MCF 10A (cell line): ENCODE measurements at regions of chr5 and their contacts with region 1.

Region 1: DNA sequence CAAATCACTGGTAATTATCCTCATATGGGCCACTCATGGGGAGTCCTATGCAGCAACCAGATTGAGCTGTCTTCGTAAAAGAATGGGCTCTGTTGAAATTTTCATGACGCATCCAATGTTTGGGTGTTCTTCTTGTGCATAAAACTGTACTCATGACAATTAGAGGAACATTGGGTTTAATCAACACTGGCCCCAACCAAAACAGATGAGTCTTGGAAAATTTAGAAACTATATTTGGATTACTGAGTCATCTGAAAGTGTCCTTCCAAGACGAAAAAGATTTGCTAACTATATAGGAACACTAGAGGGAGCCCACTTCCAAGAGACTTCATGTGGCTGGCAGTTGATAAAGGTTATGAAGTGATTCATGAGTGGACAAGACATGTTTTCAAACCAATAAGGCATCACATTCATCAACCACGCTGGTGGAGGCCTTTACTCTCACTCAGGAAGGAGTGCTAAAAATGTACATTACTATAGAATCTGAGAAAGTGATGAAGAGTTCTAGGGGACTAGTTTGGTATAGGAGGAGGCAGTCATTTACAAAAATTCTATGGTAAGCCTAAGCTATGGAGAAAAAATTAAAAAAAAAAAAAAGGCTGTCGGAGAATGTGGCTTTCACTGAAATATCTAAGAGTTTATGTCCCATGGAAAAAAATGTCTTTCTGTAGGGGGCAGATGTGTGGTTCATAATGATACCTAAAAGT is 313.5 kb downstream of the PRDM9 start:
- DNase-seq: peak; percentile 78
- H3K4me3 Mint-ChIP-seq: no peak overlapping the region
- H3K27ac Mint-ChIP-seq: peak overlapping the region; percentile 47
- H3K4me1 Mint-ChIP-seq: peaks cover 5% of the 10 kb centered on the region
- H3K27me3 Mint-ChIP-seq: no peaks in the 10 kb centered on the region
- CTCF ChIP-seq: peak; percentile 64

Region 2: DNA sequence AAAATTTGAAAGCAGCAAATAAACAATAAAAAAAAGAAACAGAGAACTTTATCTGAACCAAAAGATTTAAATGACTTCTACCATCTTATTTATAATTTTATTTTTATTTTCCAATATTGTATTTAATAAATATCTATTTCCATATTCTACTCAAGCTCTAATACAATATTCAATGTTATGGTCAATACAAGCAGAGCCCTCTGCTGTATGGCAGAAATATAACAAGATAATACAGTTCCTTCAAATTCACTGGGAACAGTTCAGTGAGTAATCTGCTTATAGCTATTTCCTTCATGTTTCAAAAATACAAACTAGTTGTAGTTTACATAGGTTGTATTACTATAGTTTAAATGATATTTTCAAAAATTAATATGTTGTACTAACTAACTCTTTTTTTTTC is 19.2 kb after region 1 on chr5:
- CTCF ChIA-PET with region 1: interaction called, 8 read pairs
- POLR2A ChIA-PET with region 1: interaction called, 3 read pairs
- intact Hi-C with region 1: loop called (anchors 2 kb)
- DNase-seq: peak; percentile 12
- H3K4me3 Mint-ChIP-seq: no peak overlapping the region
- H3K27ac Mint-ChIP-seq: no peak overlapping the region
- H3K4me1 Mint-ChIP-seq: no peaks in the 10 kb centered on the region
- H3K27me3 Mint-ChIP-seq: no peaks in the 10 kb centered on the region
- CTCF ChIP-seq: no peak

Region 3: GRCh38 chr5:23994581-23995370 is 173.9 kb after region 1 on chr5:
- CTCF ChIA-PET with region 1: interaction called, 12 read pairs
- POLR2A ChIA-PET with region 1: no interaction called
- intact Hi-C with region 1: loop called (anchors 1 kb)
- DNase-seq: peak; percentile 14
- H3K4me3 Mint-ChIP-seq: no peak overlapping the region
- H3K27ac Mint-ChIP-seq: no peak overlapping the region
- H3K4me1 Mint-ChIP-seq: no peaks in the 10 kb centered on the region
- H3K27me3 Mint-ChIP-seq: no peaks in the 10 kb centered on the region
- CTCF ChIP-seq: peak; percentile 17

Region 4: GRCh38 chr5:24110004-24110615 is 289.2 kb after region 1 on chr5:
- CTCF ChIA-PET with region 1: interaction called, 32 read pairs
- POLR2A ChIA-PET with region 1: no interaction called
- intact Hi-C with region 1: loop called (anchors 1 kb)
- DNase-seq: peak; percentile 63
- H3K4me3 Mint-ChIP-seq: no peak overlapping the region
- H3K27ac Mint-ChIP-seq: no peak overlapping the region
- H3K4me1 Mint-ChIP-seq: no peaks in the 10 kb centered on the region
- H3K27me3 Mint-ChIP-seq: no peaks in the 10 kb centered on the region
- CTCF ChIP-seq: peak; percentile 68